ENCODE measurements at regions of chr6 and their contacts with region 1.

Region 1: DNA sequence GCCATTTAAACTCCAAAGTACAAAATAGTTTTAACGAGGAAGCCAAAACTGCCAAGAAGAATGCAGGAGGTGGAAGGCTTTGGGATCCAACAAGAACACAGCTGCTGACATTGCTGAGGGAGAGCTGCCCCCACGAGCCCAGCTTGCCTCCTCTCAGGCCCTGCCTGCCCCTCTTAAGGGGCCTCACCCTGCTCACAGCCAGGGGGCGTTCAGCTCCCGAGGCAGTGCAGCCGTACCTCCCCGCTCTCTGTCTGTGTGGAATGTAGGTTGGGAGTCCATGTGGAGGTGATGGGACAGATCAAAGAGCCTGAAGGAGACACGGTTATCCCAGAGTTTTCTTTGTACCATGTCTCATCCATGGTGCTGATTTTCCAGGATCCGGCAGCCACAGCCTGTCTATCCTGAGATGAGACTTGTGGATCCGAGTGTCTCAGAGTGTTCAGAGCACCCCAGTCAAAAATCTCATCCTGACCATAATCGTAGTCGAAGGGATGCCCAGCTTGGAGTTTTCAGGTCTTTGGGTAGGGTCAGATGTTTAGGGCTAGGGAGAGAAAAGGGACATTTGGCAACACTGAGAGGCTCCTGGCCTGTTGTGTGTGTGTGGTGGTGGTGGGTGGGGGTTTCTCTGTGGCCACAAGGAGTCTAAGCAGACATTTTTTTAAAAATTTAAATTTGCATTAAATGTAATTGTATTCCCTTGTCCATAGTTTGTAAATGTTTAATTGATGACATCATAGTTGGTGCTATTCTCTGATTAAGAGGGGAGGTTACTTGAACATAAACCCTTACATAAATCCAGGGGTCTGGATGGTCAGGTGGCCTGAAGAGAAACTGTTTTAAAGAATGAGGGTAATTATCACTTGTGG is 111.4 kb upstream of the CLDN20 start:
- DNase-seq: peak; percentile 76
- ATAC-seq: peak; percentile 81
- H3K4me3 Mint-ChIP-seq: no peak overlapping the region
- H3K27ac Mint-ChIP-seq: no peak overlapping the region; the same call in 1 of the 2 replicates
- H3K4me1 Mint-ChIP-seq: peaks cover 45% of the 10 kb centered on the region
- H3K27me3 Mint-ChIP-seq: no peaks in the 10 kb centered on the region
- CTCF ChIP-seq: peak; percentile 30; the same call in 1 of the 2 replicates

Region 2: GRCh38 chr6:155123520-155123919 is 28.9 kb before region 1 on chr6:
- CTCF ChIA-PET with region 1: interaction called, 15 read pairs
- POLR2A ChIA-PET with region 1: no interaction called
- DNase-seq: no peak
- ATAC-seq: no peak
- H3K4me3 Mint-ChIP-seq: no peak overlapping the region
- H3K27ac Mint-ChIP-seq: peak overlapping the region; percentile 92
- H3K4me1 Mint-ChIP-seq: peaks cover 59% of the 10 kb centered on the region
- H3K27me3 Mint-ChIP-seq: peaks cover 4% of the 10 kb centered on the region; the same call in 1 of the 2 replicates
- CTCF ChIP-seq: no peak

Region 3: DNA sequence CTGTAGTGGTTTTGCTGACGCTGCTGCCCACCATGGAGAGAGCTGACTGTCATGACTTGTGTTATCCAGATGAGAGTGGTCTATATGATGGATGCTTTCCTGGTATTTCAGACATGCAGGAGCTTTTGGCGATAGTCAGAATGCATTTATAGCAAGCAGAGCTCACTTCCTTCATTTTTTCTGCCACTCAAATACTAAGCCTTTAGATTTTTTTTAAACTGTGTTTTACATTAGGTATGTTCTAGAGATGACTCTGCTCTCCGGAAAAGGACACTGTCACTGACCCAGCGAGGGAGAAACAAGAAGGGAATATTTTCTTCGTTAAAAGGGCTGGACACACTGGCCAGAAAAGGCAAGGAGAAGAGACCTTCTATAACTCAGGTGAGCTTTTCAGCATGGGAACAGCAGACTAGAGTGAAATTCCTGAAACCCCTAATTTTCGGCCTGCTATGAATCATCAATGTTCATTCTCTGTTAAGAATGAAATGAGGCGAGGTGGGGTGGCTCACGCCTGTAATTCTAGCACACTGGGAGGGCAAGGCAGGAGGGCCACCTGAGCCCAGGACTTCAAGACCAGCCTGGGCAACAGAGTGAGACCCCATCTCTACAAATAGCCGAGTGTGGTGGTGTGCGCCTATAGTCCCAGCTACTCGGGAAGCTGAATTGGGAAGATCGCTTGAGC is 12.7 kb after region 1 on chr6:
- CTCF ChIA-PET with region 1: interaction called, 18 read pairs
- POLR2A ChIA-PET with region 1: no interaction called
- DNase-seq: no peak
- ATAC-seq: no peak
- H3K4me3 Mint-ChIP-seq: no peak overlapping the region
- H3K27ac Mint-ChIP-seq: peak overlapping the region; percentile 52; the same call in 1 of the 2 replicates
- H3K4me1 Mint-ChIP-seq: peaks cover 10% of the 10 kb centered on the region; the same call in 1 of the 2 replicates
- H3K27me3 Mint-ChIP-seq: no peaks in the 10 kb centered on the region
- CTCF ChIP-seq: no peak

Region 4: GRCh38 chr6:155171109-155171746 is 18.8 kb after region 1 on chr6:
- CTCF ChIA-PET with region 1: interaction called, 18 read pairs
- POLR2A ChIA-PET with region 1: no interaction called
- DNase-seq: no peak
- ATAC-seq: no peak
- H3K4me3 Mint-ChIP-seq: no peak overlapping the region
- H3K27ac Mint-ChIP-seq: peak overlapping the region; percentile 69; the same call in 1 of the 2 replicates
- H3K4me1 Mint-ChIP-seq: peaks cover 33% of the 10 kb centered on the region
- H3K27me3 Mint-ChIP-seq: no peaks in the 10 kb centered on the region
- CTCF ChIP-seq: no peak

Measured in WTC11 (cell line).